Activated CD4-positive, alpha-beta T cell treated with anti-CD3 and anti-CD28 coated beads for 36 hours (primary cell): ENCODE measurements at regions of chr15 and their contacts with region 1.

Region 1: GRCh38 chr15:49620658-49621368 is at the starts of genes DTWD1 and FAM227B:
- DNase-seq: peak; percentile 96
- ATAC-seq: peak; percentile 98
- H3K4me3 Mint-ChIP-seq: peak within 1 kb of the TSS; percentile 86
- H3K27ac Mint-ChIP-seq: peak within 1 kb of the TSS; percentile 88
- H3K4me1 Mint-ChIP-seq: peaks cover 36% of the 10 kb centered on the region
- H3K27me3 Mint-ChIP-seq: no peaks in the 10 kb centered on the region
- total RNA-seq, gene DTWD1: 20.4 to 22.4 TPM
- total RNA-seq, gene FAM227B: 2.7 to 4.4 TPM

Region 2: GRCh38 chr15:48810414-48811317 is 810.1 kb before region 1 on chr15 and contains the start of gene CEP152:
- CTCF ChIA-PET with region 1: no interaction called
- POLR2A ChIA-PET with region 1: no interaction called
- intact Hi-C with region 1: loop called in 1 of 2 experiments (anchors 1 kb)
- DNase-seq: peak; percentile 98
- ATAC-seq: peak; percentile 97
- H3K4me3 Mint-ChIP-seq: peak within 1 kb of the TSS; percentile 79
- H3K27ac Mint-ChIP-seq: peak within 1 kb of the TSS; percentile 95
- H3K4me1 Mint-ChIP-seq: peaks cover 24% of the 10 kb centered on the region
- H3K27me3 Mint-ChIP-seq: no peaks in the 10 kb centered on the region
- total RNA-seq, gene CEP152: 34.4 to 42.2 TPM

Region 3: DNA sequence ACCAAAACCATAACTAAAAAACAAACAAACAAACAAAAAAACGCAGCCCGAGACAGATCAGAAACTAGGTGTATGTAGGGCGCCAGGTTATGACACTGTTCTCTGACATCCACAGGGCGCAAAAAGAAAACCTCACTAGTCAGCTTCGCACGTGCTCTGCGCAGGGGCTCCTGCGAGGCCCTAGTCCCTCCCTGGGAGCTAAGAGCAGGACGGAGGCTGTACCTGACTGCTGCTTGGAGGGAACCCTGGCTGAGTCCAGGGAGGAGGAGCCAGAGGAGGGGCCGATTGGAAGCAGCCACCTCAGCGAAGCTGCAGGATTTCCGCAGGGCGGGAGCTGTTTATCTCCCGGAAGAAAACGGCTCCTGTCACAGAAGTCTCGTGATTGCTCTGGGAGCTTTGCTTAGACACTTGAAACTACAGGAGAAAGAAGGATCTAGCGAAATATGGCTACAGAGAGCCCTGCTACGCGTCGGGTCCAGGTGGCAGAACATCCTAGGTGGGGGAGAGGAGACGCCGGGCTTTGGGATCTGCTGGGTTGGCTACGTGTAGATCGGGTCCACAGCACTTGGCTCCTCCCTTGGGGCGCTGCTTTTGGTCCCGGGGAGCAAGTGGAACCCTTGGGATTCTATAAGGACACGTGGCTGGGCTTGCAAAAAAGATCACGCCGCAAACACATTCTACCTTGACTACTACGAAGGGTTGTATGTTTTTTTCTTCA is 450.8 kb before region 1 on chr15 and contains the start of gene GALK2:
- CTCF ChIA-PET with region 1: no interaction called
- POLR2A ChIA-PET with region 1: no interaction called
- intact Hi-C with region 1: loop called (anchors 5 kb)
- DNase-seq: peak; percentile 90
- ATAC-seq: peak; percentile 99
- H3K4me3 Mint-ChIP-seq: peak within 1 kb of the TSS; percentile 82
- H3K27ac Mint-ChIP-seq: peak within 1 kb of the TSS; percentile 90
- H3K4me1 Mint-ChIP-seq: peaks cover 29% of the 10 kb centered on the region
- H3K27me3 Mint-ChIP-seq: no peaks in the 10 kb centered on the region
- total RNA-seq, gene GALK2: 19.9 to 27.1 TPM

Region 4: DNA sequence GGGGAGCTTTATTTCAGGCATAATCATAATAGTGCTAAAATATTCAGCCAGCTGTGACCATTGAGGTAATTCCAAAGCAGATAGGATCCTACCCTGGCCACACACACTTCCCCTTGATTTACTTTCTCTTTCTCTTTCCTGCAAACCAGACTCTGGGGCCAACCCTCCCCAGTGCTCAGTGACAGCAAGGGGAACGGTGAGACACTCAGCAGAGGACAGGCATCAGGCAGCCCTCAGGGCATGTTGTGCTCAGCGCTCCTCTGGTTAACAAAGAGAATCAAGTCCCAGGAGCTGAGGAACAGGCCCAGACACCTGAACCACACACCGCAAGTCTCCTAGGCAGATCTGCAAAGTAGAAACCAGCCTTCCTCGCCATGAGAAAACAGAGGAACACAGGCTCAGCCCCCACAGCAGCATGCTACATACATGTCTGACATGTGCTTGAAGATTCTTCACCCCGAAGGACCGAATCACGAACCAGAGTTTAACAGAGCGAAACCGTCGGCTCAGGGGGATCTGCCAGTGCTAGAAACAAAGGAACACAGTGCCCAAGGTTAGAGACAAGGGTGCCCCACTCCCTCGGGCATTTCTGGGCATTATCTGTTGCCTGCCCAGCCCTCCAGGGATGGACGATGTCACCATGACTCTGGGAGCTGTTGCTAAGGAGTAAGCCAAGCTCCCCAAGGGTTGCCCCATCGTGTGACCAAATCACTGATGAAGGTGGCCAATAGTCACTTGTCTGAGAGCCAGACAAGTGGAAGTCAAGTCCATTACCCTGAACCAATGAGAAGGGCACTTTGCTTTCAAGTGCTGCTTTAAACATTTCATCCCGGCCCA is 627.2 kb after region 1 on chr15:
- CTCF ChIA-PET with region 1: no interaction called
- POLR2A ChIA-PET with region 1: no interaction called
- intact Hi-C with region 1: loop called in 1 of 2 experiments (anchors 5 kb)
- DNase-seq: peak; percentile 83
- ATAC-seq: peak; percentile 99
- H3K4me3 Mint-ChIP-seq: peak overlapping the region; percentile 67
- H3K27ac Mint-ChIP-seq: peak overlapping the region; percentile 96
- H3K4me1 Mint-ChIP-seq: peaks cover 33% of the 10 kb centered on the region
- H3K27me3 Mint-ChIP-seq: no peaks in the 10 kb centered on the region